ENCODE measurements at regions of chr3 and their contacts with region 1.

Region 1: DNA sequence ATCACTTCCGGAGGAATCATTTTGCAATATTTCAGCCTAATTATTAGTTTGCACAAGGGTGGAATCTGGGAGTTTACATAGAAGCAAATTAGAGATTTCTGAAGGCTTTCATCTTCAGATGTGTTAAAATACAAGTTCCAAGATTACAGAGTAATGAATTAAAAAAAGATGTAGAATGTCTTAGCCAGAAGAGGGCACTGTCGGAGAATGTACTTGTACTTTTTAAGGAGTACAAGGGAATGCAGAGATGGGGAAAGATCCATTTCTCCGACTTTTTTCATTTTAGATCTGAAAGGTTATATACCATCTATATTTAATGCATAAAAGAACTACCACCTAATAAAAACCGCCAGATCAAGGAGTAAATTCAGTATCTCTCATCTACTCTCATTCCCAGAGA is 43.1 kb upstream of the WDR5B start:
- DNase-seq: no peak
- ATAC-seq: 0 out of 3 replicates have a peak, but pooled peaks have one; percentile 30
- H3K4me3 ChIP-seq: no peak overlapping the region
- H3K27ac ChIP-seq: no peak overlapping the region
- H3K4me1 ChIP-seq: no peaks in the 10 kb centered on the region
- H3K27me3 ChIP-seq: no peaks in the 10 kb centered on the region
- CTCF ChIP-seq: peak in 2 of 3 experiments; percentile 15 to 44; a peak in 2 of 6 replicates
- EP300 ChIP-seq: no peak
- POLR2A ChIP-seq: no peak
- RAD21 ChIP-seq: peak; percentile 63

Region 2: GRCh38 chr3:122283796-122284445 is 175.1 kb before region 1 on chr3:
- CTCF ChIA-PET with region 1: no interaction called
- POLR2A ChIA-PET with region 1: no interaction called
- RAD21 ChIA-PET with region 1: no interaction called
- SMC1A ChIA-PET with region 1: no interaction called
- in situ Hi-C with region 1: no loop called
- intact Hi-C with region 1: no loop called
- DNase-seq: no peak
- ATAC-seq: no peak
- H3K4me3 ChIP-seq: no peak overlapping the region
- H3K27ac ChIP-seq: no peak overlapping the region
- H3K4me1 ChIP-seq: no peaks in the 10 kb centered on the region; the same call in 1 of the 2 replicates
- H3K27me3 ChIP-seq: no peaks in the 10 kb centered on the region
- CTCF ChIP-seq: no peak
- EP300 ChIP-seq: no peak
- POLR2A ChIP-seq: no peak
- RAD21 ChIP-seq: no peak

Region 3: DNA sequence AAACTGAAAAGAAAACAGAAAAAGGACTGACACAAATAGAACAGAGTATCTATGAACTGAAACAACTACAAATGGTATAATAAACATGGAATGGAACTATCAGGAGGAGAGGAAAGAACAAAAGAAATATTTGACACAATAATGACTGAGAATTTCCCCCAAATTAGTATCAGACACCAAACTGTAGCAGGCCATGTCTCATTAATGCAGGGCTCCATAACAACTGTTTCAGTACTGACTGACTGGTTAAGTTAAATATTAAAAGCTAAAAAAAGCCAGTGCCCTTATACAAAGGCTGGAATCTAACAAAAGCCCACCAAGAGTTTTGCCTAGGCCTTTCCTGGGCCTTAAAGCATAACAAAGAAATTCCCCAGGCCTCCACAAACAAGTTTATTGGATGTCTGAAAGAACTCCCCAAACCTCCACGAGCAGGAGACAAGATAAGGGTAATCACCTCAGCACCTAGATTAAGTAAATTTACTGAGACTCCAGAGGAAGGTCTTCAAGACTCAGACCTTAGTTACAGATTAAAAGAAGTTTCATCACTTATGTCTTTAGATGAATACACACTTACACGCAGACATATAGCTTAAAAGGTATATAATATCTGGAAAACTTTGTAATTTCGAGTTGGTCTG is 10.0 kb after region 1 on chr3:
- CTCF ChIA-PET with region 1: interaction called, 18 read pairs
- POLR2A ChIA-PET with region 1: no interaction called
- RAD21 ChIA-PET with region 1: interaction called, 4 read pairs
- SMC1A ChIA-PET with region 1: interaction called, 31 read pairs
- in situ Hi-C with region 1: no loop called
- intact Hi-C with region 1: no loop called
- DNase-seq: peak; percentile 30
- ATAC-seq: peak; percentile 88
- H3K4me3 ChIP-seq: no peak overlapping the region
- H3K27ac ChIP-seq: peak overlapping the region; percentile 53
- H3K4me1 ChIP-seq: peaks cover 16% of the 10 kb centered on the region
- H3K27me3 ChIP-seq: no peaks in the 10 kb centered on the region
- CTCF ChIP-seq: no peak
- EP300 ChIP-seq: no peak; a peak in 1 of 4 replicates
- POLR2A ChIP-seq: no peak
- RAD21 ChIP-seq: no peak

Region 4: GRCh38 chr3:122508135-122508914 is 49.3 kb after region 1 on chr3:
- CTCF ChIA-PET with region 1: interaction called, 7 read pairs
- POLR2A ChIA-PET with region 1: no interaction called
- RAD21 ChIA-PET with region 1: interaction called, 4 read pairs
- SMC1A ChIA-PET with region 1: interaction called, 4 read pairs
- in situ Hi-C with region 1: no loop called
- intact Hi-C with region 1: loop called (anchors 2 kb)
- DNase-seq: no peak
- ATAC-seq: peak; percentile 61
- H3K4me3 ChIP-seq: peak overlapping the region; percentile 28
- H3K27ac ChIP-seq: peak overlapping the region; percentile 2
- H3K4me1 ChIP-seq: peaks cover 6% of the 10 kb centered on the region; the same call in 1 of the 2 replicates
- H3K27me3 ChIP-seq: no peaks in the 10 kb centered on the region
- CTCF ChIP-seq: no peak
- EP300 ChIP-seq: no peak
- POLR2A ChIP-seq: no peak
- RAD21 ChIP-seq: no peak

Region 5: GRCh38 chr3:122519693-122520092 is 60.7 kb after region 1 on chr3:
- CTCF ChIA-PET with region 1: interaction called, 4 read pairs
- POLR2A ChIA-PET with region 1: interaction called, 7 read pairs
- RAD21 ChIA-PET with region 1: interaction called, 6 read pairs
- SMC1A ChIA-PET with region 1: interaction called, 10 read pairs
- in situ Hi-C with region 1: no loop called
- intact Hi-C with region 1: no loop called
- DNase-seq: no peak
- ATAC-seq: no peak
- H3K4me3 ChIP-seq: no peak overlapping the region
- H3K27ac ChIP-seq: no peak overlapping the region
- H3K4me1 ChIP-seq: no peaks in the 10 kb centered on the region
- H3K27me3 ChIP-seq: no peaks in the 10 kb centered on the region
- CTCF ChIP-seq: no peak
- EP300 ChIP-seq: no peak
- POLR2A ChIP-seq: no peak
- RAD21 ChIP-seq: no peak

Region 6: DNA sequence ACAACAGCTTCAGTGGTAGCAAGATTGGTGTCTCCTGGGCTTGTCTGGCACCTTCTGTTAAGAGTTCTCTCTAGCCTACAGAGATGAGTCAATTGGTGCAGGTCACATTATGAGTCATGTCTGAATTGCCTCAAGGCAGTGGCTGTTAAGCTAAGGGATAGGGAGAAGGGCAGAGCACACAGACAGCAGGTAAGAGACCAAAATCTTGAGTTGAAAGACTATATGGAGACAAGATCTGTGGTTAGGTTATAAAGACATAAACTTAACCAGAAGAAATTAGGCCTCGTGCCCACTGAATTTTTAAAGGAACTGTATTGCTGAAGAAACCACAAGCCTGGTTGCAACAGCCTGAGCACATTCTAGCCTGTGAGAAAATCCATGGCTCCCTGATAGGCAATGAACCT is 74.9 kb after region 1 on chr3:
- CTCF ChIA-PET with region 1: interaction called, 8 read pairs
- POLR2A ChIA-PET with region 1: no interaction called
- RAD21 ChIA-PET with region 1: interaction called, 7 read pairs
- SMC1A ChIA-PET with region 1: interaction called, 8 read pairs
- in situ Hi-C with region 1: no loop called
- intact Hi-C with region 1: loop called (anchors 2 kb)
- DNase-seq: peak; percentile 79
- ATAC-seq: peak; percentile 100
- H3K4me3 ChIP-seq: no peak overlapping the region
- H3K27ac ChIP-seq: no peak overlapping the region; the same call in 1 of the 2 replicates
- H3K4me1 ChIP-seq: peaks cover 6% of the 10 kb centered on the region
- H3K27me3 ChIP-seq: no peaks in the 10 kb centered on the region
- CTCF ChIP-seq: no peak
- EP300 ChIP-seq: peak; percentile 67 to 90; a peak in 3 of 4 replicates
- POLR2A ChIP-seq: no peak
- RAD21 ChIP-seq: peak; percentile 26; the same call in 1 of the 2 replicates

Region 7: DNA sequence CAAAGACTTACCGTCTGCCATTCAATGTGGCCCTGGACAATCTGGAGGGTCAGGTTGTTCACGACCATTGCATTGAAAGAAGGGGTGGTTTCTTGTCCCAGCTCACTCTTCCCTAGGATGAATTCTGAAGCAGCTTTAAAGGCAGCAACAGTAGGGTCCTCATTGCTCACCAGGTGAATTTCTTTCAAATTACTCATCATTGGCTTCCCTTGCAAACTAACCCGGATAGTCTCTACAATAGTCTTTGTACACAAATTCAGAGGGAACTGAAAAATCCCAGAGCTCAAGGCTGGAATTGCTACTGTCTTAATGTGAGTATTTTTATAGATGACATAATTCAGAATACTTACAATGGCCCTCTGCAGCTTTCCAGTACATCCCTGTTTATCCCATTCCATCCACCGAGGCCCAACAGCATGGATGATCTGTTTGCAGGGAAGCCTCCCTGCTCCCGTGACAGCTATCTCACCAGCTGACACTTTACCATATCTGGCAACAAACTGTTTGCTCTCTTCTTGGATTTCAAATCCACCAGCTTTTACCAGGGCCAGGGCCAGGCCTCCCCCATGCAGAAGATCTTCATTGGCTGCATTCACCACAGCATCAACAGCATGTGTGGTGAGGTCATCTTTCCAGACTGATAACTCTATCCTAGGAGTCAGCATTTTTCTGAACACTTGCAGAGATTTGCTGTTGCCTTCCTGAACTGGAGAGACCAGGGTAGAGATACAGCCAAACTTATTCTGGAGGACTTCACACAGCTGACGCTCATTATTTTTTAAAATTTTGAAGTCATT is 96.5 kb after region 1 on chr3:
- CTCF ChIA-PET with region 1: interaction called, 10 read pairs
- POLR2A ChIA-PET with region 1: no interaction called
- RAD21 ChIA-PET with region 1: interaction called, 6 read pairs
- SMC1A ChIA-PET with region 1: interaction called, 19 read pairs
- in situ Hi-C with region 1: no loop called
- intact Hi-C with region 1: loop called (anchors 5 kb)
- DNase-seq: no peak
- ATAC-seq: no peak
- H3K4me3 ChIP-seq: no peak overlapping the region
- H3K27ac ChIP-seq: no peak overlapping the region
- H3K4me1 ChIP-seq: no peaks in the 10 kb centered on the region
- H3K27me3 ChIP-seq: no peaks in the 10 kb centered on the region
- CTCF ChIP-seq: no peak
- EP300 ChIP-seq: no peak
- POLR2A ChIP-seq: no peak
- RAD21 ChIP-seq: no peak